AG04449 (cell line): ENCODE measurements at regions of chr11 and their contacts with region 1.

Region 1: DNA sequence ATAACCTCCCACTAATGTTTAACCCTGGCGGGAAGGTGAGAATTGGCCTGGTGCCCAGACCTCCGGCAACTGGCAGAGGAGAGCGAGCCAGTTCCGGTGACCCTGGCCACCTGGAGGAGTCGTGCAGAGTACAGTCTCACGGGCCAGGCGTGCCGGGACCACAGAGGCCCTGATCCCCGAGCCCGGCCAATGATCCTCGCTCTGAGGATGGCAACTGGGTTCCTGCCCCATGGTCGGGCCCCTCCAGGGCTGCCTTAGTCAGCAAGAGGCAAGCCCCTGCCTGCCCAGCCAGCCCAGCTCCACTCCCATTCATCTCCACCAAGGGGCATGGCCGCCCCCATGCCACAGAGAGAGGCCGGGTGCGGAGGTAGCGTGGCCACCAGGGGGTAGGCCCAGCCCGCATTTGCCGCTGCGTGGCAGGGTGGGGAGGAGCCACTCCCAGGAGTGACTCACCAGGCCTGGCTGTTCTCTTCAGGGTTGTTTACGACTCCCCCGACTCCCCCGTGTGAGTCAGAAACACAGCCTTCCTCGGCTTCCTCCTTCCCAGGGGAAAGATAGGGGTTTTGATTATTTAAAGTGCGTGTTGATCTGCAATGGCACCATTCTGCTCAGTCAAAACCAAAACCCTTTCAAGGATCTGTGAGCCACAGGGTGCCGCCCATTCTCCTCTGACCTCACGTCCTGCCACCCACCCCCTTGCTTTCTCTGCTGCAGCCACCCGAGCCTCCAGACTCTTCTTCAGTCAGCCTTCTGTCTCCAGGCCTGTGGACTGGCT is at the start of gene SLC25A45:
- DNase-seq: peak; percentile 95
- H3K4me3 ChIP-seq: peak within 1 kb of the TSS; percentile 53
- CTCF ChIP-seq: peak; percentile 88

Region 2: DNA sequence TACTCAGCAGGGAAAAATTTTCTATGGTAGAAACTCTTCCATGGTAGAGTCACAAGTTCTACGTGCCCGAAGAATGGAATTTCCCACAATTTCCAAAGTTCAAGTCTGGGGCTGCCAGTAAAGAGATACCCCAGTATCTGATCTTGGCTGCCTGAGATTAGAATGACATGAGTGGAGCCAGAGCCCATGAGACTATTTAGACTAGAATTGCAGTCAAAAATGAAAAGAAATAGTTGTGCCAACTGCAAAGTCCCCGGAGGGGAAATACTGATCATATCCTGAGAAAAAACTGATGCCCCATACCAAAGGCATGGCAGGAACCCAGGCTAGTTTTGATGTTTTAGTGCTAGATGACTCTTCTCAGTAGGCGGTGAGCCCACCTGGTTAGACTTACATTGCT is 421.5 kb before region 1 on chr11:
- CTCF ChIA-PET with region 1: no interaction called
- POLR2A ChIA-PET with region 1: no interaction called
- DNase-seq: no peak
- H3K4me3 ChIP-seq: no peak overlapping the region
- CTCF ChIP-seq: no peak

Region 3: DNA sequence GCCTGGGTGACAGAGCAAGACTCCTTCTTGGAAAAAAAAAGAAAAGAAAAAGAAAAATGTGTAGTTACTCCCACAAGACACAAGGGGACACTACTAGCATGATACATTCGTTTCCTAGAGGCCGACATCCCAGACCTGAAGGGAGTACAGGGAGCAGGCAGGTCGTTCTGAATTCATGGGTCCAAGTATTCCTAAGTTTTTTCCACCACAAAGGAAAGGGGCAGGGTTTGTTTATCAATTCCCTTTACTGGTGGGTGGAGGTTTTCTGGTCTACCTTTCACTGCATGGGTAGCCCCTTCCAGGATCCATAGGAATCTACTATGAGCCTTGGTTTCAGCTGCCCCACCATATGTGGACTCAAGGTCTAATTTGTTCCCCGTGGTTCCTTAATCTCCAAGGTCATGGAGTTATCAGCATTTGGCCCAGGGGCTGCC is 15.9 kb before region 1 on chr11:
- CTCF ChIA-PET with region 1: interaction called, 37 read pairs
- POLR2A ChIA-PET with region 1: interaction called, 5 read pairs
- DNase-seq: no peak
- H3K4me3 ChIP-seq: no peak overlapping the region
- CTCF ChIP-seq: peak; percentile 67